ENCODE measurements at regions of chr3 and their contacts with region 1.

Region 1: GRCh38 chr3:126883241-126883640 is 99.7 kb upstream of the PLXNA1 start:
- DNase-seq: no peak
- H3K4me3 ChIP-seq: no peak overlapping the region
- H3K27ac ChIP-seq: no peak overlapping the region
- H3K4me1 ChIP-seq: no peaks in the 10 kb centered on the region
- H3K27me3 ChIP-seq: no peaks in the 10 kb centered on the region
- CTCF ChIP-seq: no peak

Region 2: GRCh38 chr3:126630020-126630419 is 253.2 kb before region 1 on chr3:
- CTCF ChIA-PET with region 1: no interaction called
- POLR2A ChIA-PET with region 1: no interaction called
- intact Hi-C with region 1: no loop called
- DNase-seq: no peak
- H3K4me3 ChIP-seq: no peak overlapping the region
- H3K27ac ChIP-seq: no peak overlapping the region
- H3K4me1 ChIP-seq: no peaks in the 10 kb centered on the region
- H3K27me3 ChIP-seq: no peaks in the 10 kb centered on the region
- CTCF ChIP-seq: no peak

Region 3: GRCh38 chr3:126664591-126665214 is 218.5 kb before region 1 on chr3:
- CTCF ChIA-PET with region 1: no interaction called
- POLR2A ChIA-PET with region 1: no interaction called
- intact Hi-C with region 1: no loop called
- DNase-seq: no peak
- H3K4me3 ChIP-seq: no peak overlapping the region
- H3K27ac ChIP-seq: no peak overlapping the region
- H3K4me1 ChIP-seq: no peaks in the 10 kb centered on the region
- H3K27me3 ChIP-seq: peaks cover 49% of the 10 kb centered on the region
- CTCF ChIP-seq: no peak; the same call in 1 of the 2 replicates

Region 4: DNA sequence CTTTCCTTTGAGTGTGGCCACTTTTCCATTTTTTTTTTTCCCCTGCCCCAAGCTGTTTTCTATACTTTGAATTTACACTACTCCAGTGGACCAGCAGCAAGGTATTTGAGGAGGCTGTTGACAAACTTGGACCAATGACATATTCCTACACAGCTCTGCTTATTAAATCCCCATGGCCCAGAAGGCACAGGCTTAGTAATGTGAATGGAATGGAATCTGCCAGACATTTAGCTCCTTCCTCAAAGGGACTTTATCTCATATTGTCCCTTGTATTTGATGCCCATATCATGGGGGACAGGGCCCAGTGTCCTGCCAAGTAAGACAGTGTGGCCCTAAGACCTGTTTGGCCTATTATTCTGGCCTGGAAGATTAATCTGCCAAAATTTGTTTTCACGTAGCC is 71.7 kb before region 1 on chr3:
- CTCF ChIA-PET with region 1: no interaction called
- POLR2A ChIA-PET with region 1: no interaction called
- intact Hi-C with region 1: no loop called
- DNase-seq: peak in 1 of 2 experiments; percentile 43
- H3K4me3 ChIP-seq: no peak overlapping the region
- H3K27ac ChIP-seq: no peak overlapping the region
- H3K4me1 ChIP-seq: 0 out of 2 replicates have a peak, but pooled peaks cover 6% of the 10 kb centered on the region
- H3K27me3 ChIP-seq: no peaks in the 10 kb centered on the region
- CTCF ChIP-seq: no peak

Region 5: DNA sequence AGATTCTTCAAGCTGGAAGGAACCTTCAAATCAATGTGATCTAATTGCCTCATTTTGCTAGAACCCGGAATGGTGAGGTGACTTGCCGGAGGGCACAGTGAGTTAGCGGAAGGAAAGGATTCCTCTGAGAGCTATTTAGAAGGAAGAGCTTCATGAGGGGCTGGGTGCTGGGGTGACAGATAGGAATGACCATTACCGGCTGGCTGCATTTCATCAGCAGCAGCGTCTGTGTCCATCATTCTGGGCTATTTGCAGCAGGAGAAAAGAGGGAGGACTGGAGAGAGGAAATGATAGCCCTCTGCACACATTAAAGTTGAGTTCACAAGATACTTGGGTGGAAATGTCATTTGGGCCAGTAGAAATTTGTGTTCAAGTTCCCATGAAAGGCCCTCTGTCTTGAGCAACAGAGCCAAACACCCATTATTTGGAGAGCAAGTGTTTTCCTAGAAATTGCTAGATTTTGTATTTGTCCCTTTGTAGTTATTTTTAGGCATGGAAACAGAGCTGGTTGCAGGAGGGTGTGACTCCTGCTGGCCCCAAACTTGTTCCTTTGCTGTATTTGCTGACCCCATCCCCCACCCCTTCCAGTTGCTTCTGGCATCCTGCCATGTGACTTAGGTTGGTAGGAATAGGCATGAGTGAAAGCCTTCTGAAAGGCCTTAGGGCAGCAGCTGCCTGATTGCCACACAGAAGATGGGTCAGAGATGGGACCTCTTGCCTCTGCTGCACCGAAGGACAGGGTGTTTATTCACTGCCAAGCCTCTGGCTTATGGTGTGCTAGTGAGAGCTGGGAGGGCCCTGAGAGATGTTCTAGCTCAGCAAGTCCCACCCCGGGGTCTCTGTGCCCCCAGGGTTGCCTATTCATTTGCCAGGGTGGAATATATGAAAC is 12.2 kb after region 1 on chr3:
- CTCF ChIA-PET with region 1: no interaction called
- POLR2A ChIA-PET with region 1: interaction called, 13 read pairs
- intact Hi-C with region 1: no loop called
- DNase-seq: peak; percentile 66 to 75
- H3K4me3 ChIP-seq: no peak overlapping the region
- H3K27ac ChIP-seq: peak overlapping the region; percentile 31
- H3K4me1 ChIP-seq: peaks cover 48% of the 10 kb centered on the region
- H3K27me3 ChIP-seq: no peaks in the 10 kb centered on the region
- CTCF ChIP-seq: no peak

Region 6: GRCh38 chr3:127170814-127171213 is 287.6 kb after region 1 on chr3:
- CTCF ChIA-PET with region 1: no interaction called
- POLR2A ChIA-PET with region 1: no interaction called
- intact Hi-C with region 1: no loop called
- DNase-seq: peak in 1 of 2 experiments; percentile 36
- H3K4me3 ChIP-seq: no peak overlapping the region
- H3K27ac ChIP-seq: no peak overlapping the region
- H3K4me1 ChIP-seq: no peaks in the 10 kb centered on the region
- H3K27me3 ChIP-seq: peaks cover 69% of the 10 kb centered on the region
- CTCF ChIP-seq: no peak

Measured in PC-9 (cell line).